ENCODE measurements at regions of chr19 and their contacts with region 1.

Region 1: DNA sequence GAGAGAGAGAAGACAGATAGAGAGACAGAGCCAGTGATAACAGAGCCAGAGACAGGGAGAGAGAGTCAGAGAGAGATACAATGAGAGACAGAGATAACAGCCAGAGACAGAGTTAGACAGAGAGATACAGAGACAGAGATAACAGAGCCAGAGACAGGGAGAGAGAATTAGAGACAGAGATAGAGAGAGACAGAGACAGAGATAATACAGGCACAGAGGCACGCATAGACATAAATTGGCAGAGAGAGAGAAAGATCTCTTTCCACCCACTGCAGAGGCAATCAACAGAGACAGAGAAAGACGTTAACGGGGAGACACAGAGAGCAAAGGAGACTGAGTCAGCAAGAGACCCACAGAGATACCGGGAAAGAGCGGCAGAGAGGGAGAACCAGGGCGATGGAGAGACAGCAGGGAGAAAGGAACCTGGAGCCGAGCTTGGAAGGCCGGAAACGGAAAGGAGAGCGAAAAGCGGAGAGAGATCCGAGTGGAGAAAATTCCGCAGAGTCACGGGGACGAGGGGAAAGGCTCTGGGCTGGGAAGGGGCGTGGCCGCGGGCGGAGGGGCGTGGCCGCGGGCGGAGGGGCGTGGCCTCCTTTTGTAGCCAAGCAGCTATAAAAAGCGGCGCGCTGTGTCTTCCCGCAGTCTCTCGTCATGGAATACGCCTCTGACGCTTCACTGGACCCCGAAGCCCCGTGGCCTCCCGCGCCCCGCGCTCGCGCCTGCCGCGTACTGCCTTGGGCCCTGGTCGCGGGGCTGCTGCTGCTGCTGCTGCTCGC is at the start of gene TNFSF9:
- DNase-seq: peak; percentile 85
- CTCF ChIP-seq: no peak

Region 2: DNA sequence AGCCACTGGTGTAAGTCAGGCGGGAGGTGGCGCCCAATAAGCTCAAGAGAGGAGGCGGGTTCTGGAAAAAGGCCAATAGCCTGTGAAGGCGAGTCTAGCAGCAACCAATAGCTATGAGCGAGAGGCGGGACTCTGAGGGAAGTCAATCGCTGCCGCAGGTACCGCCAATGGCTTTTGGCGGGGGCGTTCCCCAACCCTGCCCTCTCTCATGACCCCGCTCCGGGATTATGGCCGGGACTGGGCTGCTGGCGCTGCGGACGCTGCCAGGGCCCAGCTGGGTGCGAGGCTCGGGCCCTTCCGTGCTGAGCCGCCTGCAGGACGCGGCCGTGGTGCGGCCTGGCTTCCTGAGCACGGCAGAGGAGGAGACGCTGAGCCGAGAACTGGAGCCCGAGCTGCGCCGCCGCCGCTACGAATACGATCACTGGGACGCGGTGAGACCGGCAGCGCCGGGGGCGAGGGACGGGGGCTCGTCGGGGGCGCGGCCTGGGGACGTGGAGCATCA is 157.9 kb before region 1 on chr19 and contains the start of gene ALKBH7:
- CTCF ChIA-PET with region 1: no interaction called
- POLR2A ChIA-PET with region 1: interaction called, 16 read pairs
- DNase-seq: peak; percentile 94
- CTCF ChIP-seq: no peak

Region 3: DNA sequence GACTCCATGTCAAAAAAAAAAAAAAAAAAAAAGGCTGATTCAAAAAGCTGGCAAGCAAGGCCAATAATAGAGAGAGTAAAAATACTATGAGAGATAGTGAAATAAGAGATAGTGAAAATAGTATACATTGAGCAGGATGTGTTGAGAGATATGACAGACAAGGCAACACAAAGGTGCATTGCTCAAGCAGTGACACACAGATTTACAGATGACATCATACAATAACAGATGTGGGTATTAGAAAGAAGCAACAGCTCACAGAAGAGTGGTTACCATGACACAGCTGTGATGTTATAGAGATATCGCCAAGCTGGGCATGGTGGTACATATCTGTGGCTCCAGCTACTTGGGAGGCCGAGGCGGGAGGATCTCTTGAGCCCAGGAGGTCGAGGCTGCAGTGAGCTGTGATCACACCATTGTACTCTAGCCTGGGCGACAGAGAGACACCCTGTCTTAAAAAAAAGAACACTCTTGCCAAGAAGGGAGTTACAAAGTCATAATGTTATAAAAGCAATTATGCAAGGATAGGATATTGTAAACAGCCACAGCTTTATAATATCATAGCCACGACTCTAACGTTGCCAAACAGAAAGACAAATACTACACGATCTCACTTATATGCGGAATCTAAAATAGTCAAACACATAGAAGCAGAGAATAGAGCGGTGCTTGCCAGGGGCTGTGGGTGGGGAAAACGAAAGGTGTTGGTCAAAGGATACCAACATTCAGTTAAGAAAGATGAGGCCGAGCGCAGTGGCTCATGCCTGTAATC is 10.5 kb after region 1 on chr19:
- CTCF ChIA-PET with region 1: no interaction called
- POLR2A ChIA-PET with region 1: interaction called, 50 read pairs
- DNase-seq: no peak
- CTCF ChIP-seq: no peak

Region 4: GRCh38 chr19:6593651-6594416 is 63.3 kb after region 1 on chr19:
- CTCF ChIA-PET with region 1: no interaction called
- POLR2A ChIA-PET with region 1: interaction called, 10 read pairs
- DNase-seq: peak; percentile 42
- CTCF ChIP-seq: no peak

Region 5: DNA sequence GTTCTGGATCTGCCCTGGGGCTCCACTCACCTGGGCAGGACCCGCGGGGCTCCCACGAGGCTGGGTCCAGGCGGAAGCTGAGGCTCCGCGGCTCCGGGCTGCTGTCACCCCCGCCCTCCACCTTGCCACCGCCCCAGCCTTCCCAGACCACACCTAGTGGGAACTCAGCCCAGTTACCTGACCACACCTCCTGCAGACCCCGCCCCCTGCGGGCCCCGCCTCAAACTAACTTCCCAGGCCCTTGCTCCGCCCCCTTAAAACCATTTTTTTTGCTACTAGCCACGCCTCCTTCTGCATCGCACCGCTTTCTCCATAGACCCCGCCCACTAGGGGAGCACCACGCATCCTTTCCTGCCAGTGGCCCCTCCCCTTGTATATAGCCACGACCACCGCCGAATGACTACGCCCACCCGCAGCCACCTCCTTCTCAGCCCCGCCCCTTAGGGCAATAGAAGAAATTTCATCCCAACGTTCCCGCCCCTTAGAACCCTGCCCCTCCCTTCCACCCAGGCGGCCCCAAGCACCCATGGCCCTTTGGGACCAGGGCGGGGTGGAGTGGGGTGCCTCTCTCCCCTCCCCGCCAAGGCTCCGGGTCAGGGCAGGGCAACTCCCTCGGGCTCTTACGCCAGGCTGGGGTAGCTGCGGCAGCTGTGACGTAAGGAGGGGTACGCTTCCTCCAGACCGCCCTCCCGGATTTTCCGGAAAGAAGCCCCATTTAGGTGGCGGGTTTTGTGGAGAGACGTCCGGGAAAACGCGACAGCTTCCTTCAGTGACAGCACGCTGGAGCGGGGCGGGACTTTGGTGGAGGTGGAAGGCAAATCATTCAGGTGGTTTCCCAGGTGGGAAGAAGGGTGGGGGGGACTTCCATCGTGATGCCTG is 237.0 kb after region 1 on chr19 and contains the start of gene SH2D3A:
- CTCF ChIA-PET with region 1: no interaction called
- POLR2A ChIA-PET with region 1: interaction called, 14 read pairs
- DNase-seq: peak; percentile 95
- CTCF ChIP-seq: peak; percentile 3